ENCODE measurements at regions of chr3 and their contacts with region 1.

Region 1: DNA sequence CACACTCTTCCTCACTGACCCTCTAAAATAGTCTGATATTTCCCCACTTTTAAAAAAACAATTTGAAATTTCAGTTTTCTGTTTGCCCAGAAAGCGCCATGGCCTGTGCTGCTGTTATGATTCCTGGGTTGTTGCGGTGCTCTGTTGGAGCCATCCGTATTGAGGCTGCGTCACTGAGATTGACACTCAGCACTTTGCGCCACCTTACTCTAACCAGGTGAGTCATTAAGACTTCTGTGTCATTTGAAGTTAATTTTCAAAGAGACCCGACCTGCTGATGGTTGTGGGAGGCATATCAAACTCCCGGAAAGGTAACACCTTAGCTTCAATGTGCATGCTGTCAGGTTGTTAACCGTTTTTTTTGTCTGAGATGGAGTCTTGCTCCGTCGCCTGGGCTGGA is 5.8 kb downstream of the OXNAD1 start:
- DNase-seq: no peak

Region 2: DNA sequence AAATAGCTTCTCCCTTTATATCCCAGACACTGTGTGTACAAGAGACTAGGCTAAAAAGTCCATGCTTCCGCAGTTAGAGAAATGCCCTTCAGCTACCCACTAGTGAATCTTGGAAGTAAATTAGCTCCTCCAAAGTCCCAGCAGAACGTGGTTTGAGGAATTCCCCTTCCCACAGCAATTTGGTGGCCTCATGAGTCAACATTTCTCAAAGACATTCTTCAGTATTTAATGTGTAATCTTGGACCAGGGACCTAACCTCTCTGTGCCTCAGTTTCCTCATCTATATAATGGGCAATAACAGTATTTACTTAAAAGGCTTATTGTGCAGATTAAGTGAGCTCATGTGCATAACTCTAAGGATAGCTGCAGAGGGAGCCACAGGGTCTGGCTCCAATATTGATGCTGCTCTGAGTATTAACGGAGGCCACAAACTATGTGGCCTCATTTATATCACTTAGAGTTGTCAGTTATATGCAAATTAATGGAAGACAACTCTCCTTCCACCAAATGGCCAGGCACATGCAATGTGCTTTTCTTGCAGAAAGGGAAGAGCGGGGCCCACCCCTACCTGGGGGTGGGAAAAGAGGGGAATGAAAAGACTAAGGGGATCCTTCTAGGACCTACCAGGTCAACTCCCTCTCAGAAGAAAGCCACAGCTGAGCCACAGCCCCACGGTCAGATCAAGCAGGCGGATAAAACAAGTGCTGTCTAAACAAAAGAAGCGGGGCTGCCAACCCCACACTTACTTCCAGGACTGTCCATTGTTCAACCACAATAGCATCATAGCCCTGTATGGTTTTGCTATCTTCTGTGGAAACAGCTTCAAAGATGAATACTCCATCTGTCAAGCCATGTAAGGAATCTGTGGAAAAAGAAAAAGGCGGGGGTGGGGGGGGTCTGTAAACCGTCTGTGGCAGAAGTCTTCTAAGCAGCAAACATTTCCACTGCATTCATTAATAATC is 86.6 kb after region 1 on chr3:
- intact Hi-C with region 1: loop called (anchors 5 kb)
- DNase-seq: no peak

Measured in cardiac septum (tissue), 1 donor.